ENCODE measurements at regions of chr10 and their contacts with region 1.

Region 1: DNA sequence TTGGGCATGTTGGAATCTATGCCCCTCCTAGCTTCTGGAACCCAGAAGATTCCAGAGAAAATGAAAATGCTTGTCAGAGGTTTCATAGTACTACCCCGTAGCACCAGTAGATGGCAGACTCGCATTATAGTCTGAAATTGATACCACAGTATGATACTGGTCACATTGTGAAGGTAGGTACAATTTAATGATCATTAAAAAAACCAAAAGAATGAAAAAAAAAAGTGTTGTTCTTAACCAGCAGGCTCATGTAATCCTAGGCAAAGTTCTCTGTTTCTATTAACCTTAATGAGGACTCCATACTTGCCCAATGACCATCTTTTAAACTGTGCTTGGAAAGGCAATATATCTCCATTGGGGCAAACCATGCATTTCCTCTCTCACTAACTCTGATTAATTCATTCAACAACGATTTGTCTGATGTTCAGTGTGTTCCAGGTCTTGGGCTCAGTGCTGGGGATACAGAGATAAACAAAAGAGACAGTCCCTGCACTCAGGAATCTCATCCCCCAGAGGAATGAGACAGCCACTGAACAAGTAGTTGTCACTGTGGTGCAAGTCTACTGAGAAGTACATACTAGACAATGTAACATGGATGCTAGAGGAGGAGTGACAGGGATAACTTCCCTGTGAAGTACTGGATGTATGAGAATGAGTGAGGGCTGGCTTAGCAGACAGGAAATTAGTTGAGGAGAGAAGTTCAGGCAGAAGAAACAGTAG is 223.5 kb upstream of the PHYHIPL start:
- DNase-seq: no peak

Region 2: DNA sequence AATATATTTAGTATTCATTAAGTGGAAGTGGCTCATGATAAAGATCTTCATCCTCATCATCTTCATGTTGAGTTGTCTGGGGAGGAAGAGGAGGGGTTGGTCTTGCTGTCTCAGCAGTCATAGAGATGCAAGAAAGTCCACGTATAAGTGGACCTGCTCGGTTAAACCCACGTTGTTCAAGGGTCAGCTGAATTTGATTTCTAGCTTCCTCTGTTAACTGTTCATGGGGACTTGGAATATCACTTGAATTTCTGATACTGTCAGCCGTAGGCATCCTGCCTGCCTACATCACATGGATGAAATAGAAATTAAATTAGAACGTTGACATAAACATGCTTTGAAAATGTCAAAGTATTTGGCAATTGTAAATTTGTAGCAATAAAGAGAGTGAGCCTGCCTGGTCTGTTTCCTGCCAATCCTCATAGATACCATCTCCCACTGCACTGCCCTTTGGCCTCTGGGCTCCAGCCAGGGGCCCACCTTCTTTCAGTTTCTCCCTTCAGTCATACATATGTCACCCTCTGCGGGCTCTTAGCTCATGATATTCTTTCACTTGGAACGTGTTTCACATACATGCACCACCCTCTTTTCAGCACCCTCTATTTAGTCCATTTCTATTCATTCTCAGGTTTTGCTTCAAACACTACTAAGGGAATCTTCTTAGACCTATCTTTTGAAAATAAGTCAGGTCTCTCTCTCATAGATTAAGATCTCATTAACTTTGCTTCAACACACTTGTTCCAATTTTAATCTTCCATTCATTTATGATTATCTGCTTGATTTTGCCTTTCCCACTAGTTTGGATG is 1061.5 kb before region 1 on chr10:
- intact Hi-C with region 1: no loop called
- DNase-seq: no peak

Region 3: GRCh38 chr10:58414270-58415041 is 538.5 kb before region 1 on chr10:
- intact Hi-C with region 1: loop called (anchors 10 kb)
- DNase-seq: no peak

Region 4: DNA sequence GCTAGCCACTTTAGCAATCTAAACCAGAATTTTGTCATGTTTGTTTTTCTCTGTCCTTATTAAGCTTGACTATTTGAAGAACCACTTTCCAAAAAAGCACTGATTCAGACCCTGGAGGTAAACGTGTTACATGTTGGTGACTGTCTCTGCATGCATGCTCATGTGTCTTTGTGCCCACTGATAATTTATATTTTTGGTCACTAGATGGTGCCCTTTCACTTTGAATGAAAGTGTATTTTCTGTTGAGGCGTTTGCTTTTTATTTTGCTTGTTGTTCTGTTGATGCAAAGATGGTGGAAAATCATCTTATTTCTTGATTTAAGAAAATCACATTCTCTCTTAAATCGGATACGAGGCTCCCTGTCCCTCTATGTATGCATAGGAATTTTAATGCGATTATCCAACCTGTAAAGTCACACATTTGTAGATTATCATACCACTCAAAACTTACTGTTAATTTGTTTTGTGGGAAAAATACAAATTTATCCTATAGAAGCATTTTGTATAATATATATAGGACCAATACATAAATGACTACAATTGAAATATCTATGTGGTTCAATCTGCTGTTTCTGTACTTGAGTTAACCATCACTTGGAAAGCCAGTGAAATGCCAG is 170.9 kb before region 1 on chr10:
- intact Hi-C with region 1: loop called (anchors 5 kb)
- DNase-seq: no peak

Region 5: GRCh38 chr10:59148701-59149100 is 195.8 kb after region 1 on chr10:
- intact Hi-C with region 1: no loop called
- DNase-seq: no peak

Region 6: GRCh38 chr10:59181668-59182067 is 228.8 kb after region 1 on chr10:
- intact Hi-C with region 1: loop called (anchors 2 kb)
- DNase-seq: no peak

Region 7: DNA sequence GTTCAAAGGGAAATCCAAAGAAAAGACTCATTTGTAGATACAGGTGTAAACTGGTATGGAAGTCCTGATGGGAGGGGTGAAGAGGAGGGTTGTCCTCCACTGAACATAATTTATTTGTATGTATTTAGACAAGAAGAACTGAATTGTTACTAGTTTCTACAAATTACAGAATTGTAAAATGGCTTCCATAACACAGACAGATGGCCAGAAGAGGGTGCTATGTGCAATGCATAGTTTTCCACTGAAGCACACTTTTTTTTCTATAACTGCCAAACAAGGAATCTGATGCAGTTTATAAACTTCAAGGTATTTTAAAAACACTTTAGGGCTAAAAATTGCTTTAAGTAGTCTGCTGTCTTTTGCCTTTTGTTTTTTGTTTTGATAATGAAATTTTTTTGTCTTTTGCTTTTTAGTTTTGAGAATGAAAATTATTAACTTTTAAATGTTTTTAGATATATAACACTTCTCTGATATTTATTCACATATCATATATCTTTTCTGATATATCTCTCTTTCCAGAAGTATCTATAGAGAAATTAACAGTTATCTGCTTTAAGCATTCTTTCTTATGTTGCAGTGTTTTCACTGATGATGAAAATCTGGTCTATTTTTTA is 282.0 kb after region 1 on chr10:
- intact Hi-C with region 1: loop called (anchors 5 kb)
- DNase-seq: no peak

Region 8: DNA sequence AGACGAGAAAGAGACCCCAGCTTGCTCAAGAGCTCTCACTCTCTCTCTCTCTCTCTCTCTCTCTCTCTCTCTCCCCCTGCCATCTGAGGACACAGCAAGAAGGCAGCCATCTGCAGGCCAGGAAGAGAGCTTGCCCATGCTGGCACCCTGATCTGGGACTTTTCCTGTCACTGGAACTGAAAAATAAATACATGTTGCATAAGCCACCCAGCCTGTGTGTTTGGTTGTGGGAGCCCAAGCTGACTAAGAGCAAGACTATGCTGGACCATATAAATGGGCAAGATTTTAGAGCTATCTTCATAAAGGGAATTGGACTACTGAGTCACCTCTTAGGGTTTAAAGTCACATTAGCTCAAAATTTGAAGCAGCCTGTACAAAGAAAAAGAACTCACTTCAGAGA is 658.1 kb after region 1 on chr10:
- intact Hi-C with region 1: loop called (anchors 10 kb)
- DNase-seq: no peak